Posterior vena cava (tissue), 2 donors: ENCODE measurements at regions of chr15 and their contacts with region 1.

Region 1: DNA sequence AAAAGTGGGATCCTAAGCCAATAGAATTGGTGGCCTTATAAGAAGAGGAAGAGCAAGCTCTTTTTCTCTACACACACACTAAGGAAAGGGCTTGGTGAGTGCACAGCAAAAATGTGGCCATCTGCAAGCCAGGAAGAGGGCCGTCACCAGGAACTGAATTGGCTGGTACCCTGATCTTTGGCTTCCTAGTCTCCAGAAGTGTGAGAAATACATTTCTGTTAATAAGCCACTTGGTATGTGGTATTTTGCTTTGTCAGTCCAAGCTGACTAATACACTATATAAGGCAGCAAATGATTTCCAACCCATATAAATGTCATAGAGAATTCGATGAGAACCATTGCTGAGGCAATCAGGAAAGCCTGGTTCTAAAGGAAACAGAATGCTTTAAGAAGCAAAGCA is 816.3 kb upstream of the SEMA6D start:
- DNase-seq: no peak

Region 2: GRCh38 chr15:46808834-46809233 is 92.2 kb before region 1 on chr15:
- intact Hi-C with region 1: no loop called
- DNase-seq: no peak

Region 3: DNA sequence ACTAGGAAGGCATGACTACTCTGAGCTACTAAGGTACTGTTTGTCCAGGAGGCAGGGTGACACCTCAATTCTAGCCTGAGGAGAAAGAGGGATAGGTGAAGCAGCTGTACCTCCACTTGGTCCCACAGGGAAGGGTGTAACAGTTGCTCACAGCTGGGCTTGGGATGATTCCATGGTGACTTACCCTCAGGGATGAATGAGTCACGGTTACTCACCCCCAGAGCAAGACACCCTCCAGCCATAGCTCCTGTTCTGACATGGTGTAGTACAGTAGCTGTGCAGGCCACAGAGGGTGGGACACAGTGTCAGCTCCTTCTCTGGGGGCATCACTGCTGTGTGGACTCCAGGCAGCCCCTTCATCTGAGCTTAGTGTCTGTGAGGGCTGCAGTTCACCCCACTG is 52.3 kb before region 1 on chr15:
- intact Hi-C with region 1: no loop called
- DNase-seq: no peak

Region 4: DNA sequence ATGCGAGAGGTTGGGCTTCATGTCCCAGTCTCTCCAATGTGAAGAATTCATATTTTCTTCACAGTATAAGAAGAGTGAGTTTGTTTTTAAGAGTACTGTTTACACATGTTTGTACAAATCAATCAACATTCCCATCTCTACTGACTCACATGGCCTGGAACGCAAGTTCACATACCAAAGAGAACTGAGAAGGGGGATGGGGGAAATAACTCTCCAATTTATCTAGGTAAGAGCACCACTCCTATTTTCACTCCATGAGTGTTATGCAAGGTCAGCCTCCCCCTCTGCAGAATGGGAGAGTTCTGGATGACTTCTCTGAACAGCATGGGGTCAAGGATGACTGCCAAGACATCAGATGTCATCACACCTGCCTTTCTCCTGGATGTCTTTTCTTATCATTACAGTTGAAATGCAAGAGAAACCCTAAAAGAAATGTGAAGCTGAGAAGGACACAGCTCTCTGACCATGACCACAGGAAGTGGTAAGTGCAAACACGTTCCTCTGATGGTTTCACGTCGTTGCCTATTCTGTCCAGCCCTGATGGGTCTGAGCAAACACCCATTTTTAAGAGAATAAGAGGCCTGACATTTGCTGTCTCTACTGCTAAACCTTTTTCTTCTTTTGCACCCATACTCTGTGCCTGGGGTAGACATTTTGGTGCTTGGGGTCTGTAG is 911.6 kb after region 1 on chr15:
- intact Hi-C with region 1: loop called in 1 of 2 experiments (anchors 10 kb)
- DNase-seq: no peak